A673 (cell line): ENCODE measurements at regions of chr10 and their contacts with region 1.

Region 1: GRCh38 chr10:58781873-58782488 is 269.3 kb downstream of the BICC1 start:
- DNase-seq: peak; percentile 63
- H3K4me3 ChIP-seq: no peak overlapping the region
- H3K27ac ChIP-seq: no peak overlapping the region
- H3K4me1 ChIP-seq: no peaks in the 10 kb centered on the region
- H3K27me3 ChIP-seq: no peaks in the 10 kb centered on the region
- CTCF ChIP-seq: peak; percentile 67

Region 2: GRCh38 chr10:58531084-58531695 is 250.8 kb before region 1 on chr10:
- CTCF ChIA-PET with region 1: no interaction called
- POLR2A ChIA-PET with region 1: no interaction called
- intact Hi-C with region 1: loop called (anchors 5 kb)
- DNase-seq: peak; percentile 78
- H3K4me3 ChIP-seq: no peak overlapping the region
- H3K27ac ChIP-seq: no peak overlapping the region
- H3K4me1 ChIP-seq: no peaks in the 10 kb centered on the region
- H3K27me3 ChIP-seq: peaks cover 4% of the 10 kb centered on the region
- CTCF ChIP-seq: peak; percentile 79

Region 3: DNA sequence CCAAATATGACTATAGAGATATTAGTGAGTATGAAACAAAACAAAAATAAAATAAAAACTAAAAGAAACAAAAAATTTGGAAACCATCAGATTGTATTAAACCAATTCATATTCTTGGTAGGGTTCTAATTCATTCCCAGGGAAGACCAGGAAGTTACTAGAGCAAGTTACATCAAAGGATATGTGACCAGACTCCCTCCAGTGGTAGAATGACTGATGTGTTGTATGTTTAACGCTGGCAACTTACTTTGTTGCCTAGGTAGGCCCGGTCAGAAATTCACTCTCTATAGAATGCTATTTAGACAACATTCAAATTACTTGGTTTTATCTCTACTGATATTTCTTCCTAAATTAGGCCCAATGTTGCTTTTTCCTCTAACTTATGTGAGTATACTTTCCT is 399.7 kb after region 1 on chr10:
- CTCF ChIA-PET with region 1: no interaction called
- POLR2A ChIA-PET with region 1: no interaction called
- intact Hi-C with region 1: loop called (anchors 5 kb)
- DNase-seq: peak; percentile 58
- H3K4me3 ChIP-seq: no peak overlapping the region
- H3K27ac ChIP-seq: no peak overlapping the region
- H3K4me1 ChIP-seq: no peaks in the 10 kb centered on the region
- H3K27me3 ChIP-seq: peaks cover 31% of the 10 kb centered on the region
- CTCF ChIP-seq: peak; percentile 62

Region 4: DNA sequence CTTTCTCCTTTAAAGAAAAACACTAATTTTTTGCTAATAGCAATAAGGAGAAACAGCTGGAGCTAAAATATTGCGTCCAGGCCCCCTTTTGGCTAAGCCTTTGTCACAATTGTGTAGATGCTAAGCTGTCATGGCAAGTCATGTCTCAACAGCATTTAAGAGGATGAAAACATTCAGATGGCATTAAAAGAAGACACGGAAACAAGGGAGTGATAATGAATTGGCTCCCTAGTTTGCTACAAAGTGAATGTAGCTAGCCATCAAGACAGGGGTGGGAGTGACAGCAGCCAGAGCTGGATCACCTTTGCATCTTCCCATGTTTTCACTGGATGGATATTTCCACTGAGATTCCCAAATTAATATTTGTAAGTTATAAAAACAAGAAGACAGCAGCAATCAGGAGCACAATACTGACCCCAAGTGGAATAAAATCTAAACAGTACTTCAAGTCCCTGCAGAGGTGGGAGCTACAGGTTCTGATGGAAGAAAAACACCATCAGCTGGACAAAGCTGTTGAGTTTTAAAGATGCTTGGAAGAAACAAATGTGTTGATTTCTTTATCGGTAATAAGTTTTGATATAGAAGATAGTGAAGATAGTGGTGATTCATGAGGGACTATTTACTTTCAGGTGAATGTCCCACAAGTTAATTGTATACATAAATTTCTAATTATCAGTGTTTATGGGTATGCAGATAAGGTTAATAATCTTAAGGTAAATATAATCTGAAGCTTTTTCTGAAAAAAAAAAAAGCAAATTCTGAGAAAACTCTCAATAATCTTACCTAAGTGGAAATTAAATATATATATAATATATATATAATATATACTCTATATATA is 798.3 kb after region 1 on chr10:
- CTCF ChIA-PET with region 1: no interaction called
- POLR2A ChIA-PET with region 1: no interaction called
- intact Hi-C with region 1: loop called (anchors 5 kb)
- DNase-seq: peak; percentile 81
- H3K4me3 ChIP-seq: no peak overlapping the region
- H3K27ac ChIP-seq: no peak overlapping the region
- H3K4me1 ChIP-seq: peaks cover 15% of the 10 kb centered on the region
- H3K27me3 ChIP-seq: no peaks in the 10 kb centered on the region
- CTCF ChIP-seq: peak; percentile 72

Region 5: GRCh38 chr10:60434418-60435046 is 1652.6 kb after region 1 on chr10:
- CTCF ChIA-PET with region 1: no interaction called
- POLR2A ChIA-PET with region 1: no interaction called
- intact Hi-C with region 1: loop called (anchors 10 kb)
- DNase-seq: peak; percentile 72
- H3K4me3 ChIP-seq: no peak overlapping the region
- H3K27ac ChIP-seq: no peak overlapping the region
- H3K4me1 ChIP-seq: no peaks in the 10 kb centered on the region
- H3K27me3 ChIP-seq: no peaks in the 10 kb centered on the region
- CTCF ChIP-seq: peak; percentile 78